Activated CD4-positive, alpha-beta memory T cell treated with anti-CD3 and anti-CD28 coated beads for 36 hours (primary cell): ENCODE measurements at regions of chr10 and their contacts with region 1.

Region 1: GRCh38 chr10:7687228-7687907 is 15.7 kb upstream of the ITIH2 start:
- DNase-seq: peak; percentile 86
- H3K4me3 Mint-ChIP-seq: no peak overlapping the region
- H3K27ac Mint-ChIP-seq: no peak overlapping the region
- H3K4me1 Mint-ChIP-seq: peaks cover 15% of the 10 kb centered on the region
- H3K27me3 Mint-ChIP-seq: peaks cover 15% of the 10 kb centered on the region

Region 2: GRCh38 chr10:7388602-7389001 is 298.8 kb before region 1 on chr10:
- CTCF ChIA-PET with region 1: no interaction called
- POLR2A ChIA-PET with region 1: no interaction called
- intact Hi-C with region 1: no loop called
- DNase-seq: peak; percentile 49
- H3K4me3 Mint-ChIP-seq: peak overlapping the region; percentile 40
- H3K27ac Mint-ChIP-seq: peak overlapping the region; percentile 87
- H3K4me1 Mint-ChIP-seq: peaks cover 52% of the 10 kb centered on the region
- H3K27me3 Mint-ChIP-seq: no peaks in the 10 kb centered on the region

Region 3: GRCh38 chr10:7410862-7411670 is 276.3 kb before region 1 on chr10 and contains the start of gene SFMBT2:
- CTCF ChIA-PET with region 1: no interaction called
- POLR2A ChIA-PET with region 1: no interaction called
- intact Hi-C with region 1: loop called (anchors 10 kb)
- DNase-seq: peak; percentile 75
- H3K4me3 Mint-ChIP-seq: peak within 1 kb of the TSS; percentile 93
- H3K27ac Mint-ChIP-seq: peak within 1 kb of the TSS; percentile 74
- H3K4me1 Mint-ChIP-seq: peaks cover 25% of the 10 kb centered on the region
- H3K27me3 Mint-ChIP-seq: peaks cover 10% of the 10 kb centered on the region
- total RNA-seq, gene SFMBT2: 12.8 to 15.4 TPM

Region 4: GRCh38 chr10:7561216-7561893 is 126.0 kb before region 1 on chr10:
- CTCF ChIA-PET with region 1: interaction called, 11 read pairs
- POLR2A ChIA-PET with region 1: no interaction called
- intact Hi-C with region 1: no loop called
- DNase-seq: no peak
- H3K4me3 Mint-ChIP-seq: no peak overlapping the region
- H3K27ac Mint-ChIP-seq: no peak overlapping the region
- H3K4me1 Mint-ChIP-seq: no peaks in the 10 kb centered on the region
- H3K27me3 Mint-ChIP-seq: peaks cover 10% of the 10 kb centered on the region

Region 5: DNA sequence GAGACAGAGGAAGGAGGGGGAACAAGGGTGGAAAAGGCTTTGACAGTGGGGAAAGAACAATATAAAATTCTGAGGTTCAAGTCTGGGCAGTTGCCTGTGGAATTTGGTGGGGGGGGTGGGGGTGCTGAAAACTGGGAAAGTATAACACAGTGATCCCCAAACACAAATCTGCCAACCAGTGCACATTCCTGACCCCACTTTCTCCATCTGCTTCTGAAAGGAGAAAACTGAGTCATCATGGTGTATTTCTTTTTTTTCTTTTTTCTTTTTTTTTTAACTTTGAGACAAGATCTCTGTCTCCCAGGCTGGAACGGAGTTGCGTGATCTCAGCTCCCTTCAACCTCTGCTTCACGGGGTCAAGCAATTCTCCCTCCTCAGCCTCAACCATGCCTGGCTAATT is 16.2 kb before region 1 on chr10:
- CTCF ChIA-PET with region 1: interaction called, 27 read pairs
- POLR2A ChIA-PET with region 1: no interaction called
- intact Hi-C with region 1: no loop called
- DNase-seq: no peak
- H3K4me3 Mint-ChIP-seq: no peak overlapping the region
- H3K27ac Mint-ChIP-seq: no peak overlapping the region
- H3K4me1 Mint-ChIP-seq: peaks cover 6% of the 10 kb centered on the region
- H3K27me3 Mint-ChIP-seq: peaks cover 37% of the 10 kb centered on the region

Region 6: GRCh38 chr10:9302120-9302746 is 1614.9 kb after region 1 on chr10:
- CTCF ChIA-PET with region 1: interaction called, 12 read pairs
- POLR2A ChIA-PET with region 1: no interaction called
- intact Hi-C with region 1: loop called (anchors 5 kb)
- DNase-seq: no peak
- H3K4me3 Mint-ChIP-seq: no peak overlapping the region
- H3K27ac Mint-ChIP-seq: no peak overlapping the region
- H3K4me1 Mint-ChIP-seq: no peaks in the 10 kb centered on the region
- H3K27me3 Mint-ChIP-seq: peaks cover 7% of the 10 kb centered on the region